Activated CD4-positive, alpha-beta T cell treated with anti-CD3 and anti-CD28 coated beads, Interleukin-2, amount 10 ng/mL, durations not matched to agents 24 days and 14 days (primary cell): ENCODE measurements at regions of chr2 and their contacts with region 1.

Region 1: GRCh38 chr2:105734762-105735538 is 9.8 kb upstream of the NCK2 start:
- DNase-seq: no peak
- H3K4me3 Mint-ChIP-seq: no peak overlapping the region
- H3K27ac Mint-ChIP-seq: no peak overlapping the region
- H3K4me1 Mint-ChIP-seq: peaks cover 48% of the 10 kb centered on the region
- H3K27me3 Mint-ChIP-seq: no peaks in the 10 kb centered on the region

Region 2: GRCh38 chr2:105526000-105526925 is 208.7 kb before region 1 on chr2:
- intact Hi-C with region 1: no loop called
- DNase-seq: no peak
- H3K4me3 Mint-ChIP-seq: no peak overlapping the region
- H3K27ac Mint-ChIP-seq: no peak overlapping the region
- H3K4me1 Mint-ChIP-seq: no peaks in the 10 kb centered on the region
- H3K27me3 Mint-ChIP-seq: peaks cover 5% of the 10 kb centered on the region

Region 3: DNA sequence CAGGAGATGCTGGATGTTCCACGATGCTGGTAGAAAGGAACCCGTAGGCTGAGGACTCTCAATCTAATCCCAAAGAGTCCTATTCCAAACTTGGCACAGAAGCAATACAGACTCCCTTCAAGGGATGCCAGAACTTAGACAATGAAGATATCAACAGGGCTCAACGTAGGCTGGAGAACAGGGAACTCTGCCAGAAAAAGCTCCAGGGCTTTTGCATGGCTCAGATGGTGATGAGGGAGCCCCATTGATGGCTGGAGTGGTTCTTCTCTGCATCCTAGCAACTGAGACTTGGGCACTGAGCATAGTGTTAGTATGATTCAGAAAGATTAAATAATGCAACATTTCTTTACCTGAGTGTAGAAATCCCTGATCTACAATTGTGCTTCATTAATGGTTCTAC is 107.4 kb before region 1 on chr2:
- intact Hi-C with region 1: no loop called
- DNase-seq: no peak
- H3K4me3 Mint-ChIP-seq: no peak overlapping the region
- H3K27ac Mint-ChIP-seq: no peak overlapping the region
- H3K4me1 Mint-ChIP-seq: no peaks in the 10 kb centered on the region
- H3K27me3 Mint-ChIP-seq: peaks cover 23% of the 10 kb centered on the region

Region 4: GRCh38 chr2:105652014-105652796 is 82.7 kb before region 1 on chr2:
- intact Hi-C with region 1: loop called (anchors 5 kb)
- DNase-seq: peak; percentile 32
- H3K4me3 Mint-ChIP-seq: no peak overlapping the region
- H3K27ac Mint-ChIP-seq: no peak overlapping the region
- H3K4me1 Mint-ChIP-seq: peaks cover 3% of the 10 kb centered on the region
- H3K27me3 Mint-ChIP-seq: peaks cover 2% of the 10 kb centered on the region

Region 5: DNA sequence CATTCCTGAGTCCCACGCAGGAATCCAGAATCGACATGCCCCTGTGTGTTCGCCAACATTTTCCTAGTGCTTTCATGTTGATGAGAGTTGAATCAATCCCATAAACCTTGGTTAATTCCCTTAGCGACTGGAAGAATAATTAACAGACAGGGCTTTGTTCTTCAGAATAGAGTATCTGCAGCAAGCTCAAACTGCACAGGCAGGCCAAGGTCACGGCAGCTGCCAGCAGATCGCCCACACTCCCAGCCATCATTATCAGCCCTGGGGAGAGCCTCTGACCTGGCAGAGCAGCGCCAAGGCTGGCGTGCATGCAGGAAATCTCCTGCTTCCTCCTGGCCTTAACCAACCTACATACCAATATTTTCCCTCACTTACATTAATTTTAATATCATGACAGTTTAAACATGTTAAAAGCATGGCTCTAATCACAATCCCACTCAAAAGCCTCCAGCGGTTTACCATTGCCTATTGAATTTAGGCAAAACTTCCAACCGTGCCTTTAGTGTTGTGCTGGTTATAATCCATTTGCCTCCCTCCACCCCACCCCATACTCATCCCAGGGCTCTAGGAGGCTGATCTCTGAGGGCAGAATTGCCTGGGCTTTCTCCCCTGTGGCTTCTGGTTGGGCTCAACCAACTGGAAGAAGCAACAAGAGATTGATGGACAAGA is 37.0 kb before region 1 on chr2:
- intact Hi-C with region 1: no loop called
- DNase-seq: peak; percentile 32
- H3K4me3 Mint-ChIP-seq: no peak overlapping the region
- H3K27ac Mint-ChIP-seq: no peak overlapping the region
- H3K4me1 Mint-ChIP-seq: no peaks in the 10 kb centered on the region
- H3K27me3 Mint-ChIP-seq: peaks cover 32% of the 10 kb centered on the region